ENCODE measurements at regions of chr11 and their contacts with region 1.

Region 1: DNA sequence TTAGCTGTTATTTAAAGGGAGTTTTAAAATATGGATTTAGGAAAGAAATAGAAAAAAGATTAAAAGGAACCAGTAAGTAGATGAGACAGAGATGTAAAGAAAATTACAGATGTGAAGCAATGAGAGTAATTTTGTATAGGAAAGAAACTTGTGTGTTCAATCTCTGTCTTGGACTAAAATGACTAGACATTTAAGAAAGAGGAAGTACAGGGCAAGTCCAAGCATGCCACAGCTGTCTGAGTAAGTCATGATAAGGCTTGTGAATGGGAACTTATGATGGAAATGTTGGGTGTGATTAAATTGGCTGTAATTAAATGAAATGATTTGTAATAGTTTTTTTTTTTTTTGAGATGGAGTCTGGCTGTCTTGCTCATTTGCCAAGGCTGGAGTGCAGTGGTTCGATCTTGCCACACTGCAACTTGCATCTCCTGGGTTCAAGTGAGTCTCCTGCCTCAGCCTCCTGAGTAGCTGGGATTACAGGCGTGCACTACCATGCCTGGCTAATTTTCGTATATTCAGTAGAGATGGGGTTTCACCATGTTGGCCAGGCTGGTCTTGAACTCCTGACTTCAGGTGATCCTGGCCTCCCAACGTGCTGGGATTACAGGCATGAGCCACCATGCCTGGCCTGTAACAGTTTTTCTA is 5.9 kb upstream of the ACY3 start:
- DNase-seq: no peak
- H3K4me3 ChIP-seq: no peak overlapping the region
- H3K27me3 ChIP-seq: 0 out of 2 replicates have a peak, but pooled peaks cover 1% of the 10 kb centered on the region
- CTCF ChIP-seq: no peak

Region 2: GRCh38 chr11:66950113-66950535 is 706.3 kb before region 1 on chr11:
- CTCF ChIA-PET with region 1: no interaction called
- POLR2A ChIA-PET with region 1: no interaction called
- DNase-seq: no peak
- H3K4me3 ChIP-seq: no peak overlapping the region
- H3K27me3 ChIP-seq: no peaks in the 10 kb centered on the region
- CTCF ChIP-seq: no peak

Region 3: DNA sequence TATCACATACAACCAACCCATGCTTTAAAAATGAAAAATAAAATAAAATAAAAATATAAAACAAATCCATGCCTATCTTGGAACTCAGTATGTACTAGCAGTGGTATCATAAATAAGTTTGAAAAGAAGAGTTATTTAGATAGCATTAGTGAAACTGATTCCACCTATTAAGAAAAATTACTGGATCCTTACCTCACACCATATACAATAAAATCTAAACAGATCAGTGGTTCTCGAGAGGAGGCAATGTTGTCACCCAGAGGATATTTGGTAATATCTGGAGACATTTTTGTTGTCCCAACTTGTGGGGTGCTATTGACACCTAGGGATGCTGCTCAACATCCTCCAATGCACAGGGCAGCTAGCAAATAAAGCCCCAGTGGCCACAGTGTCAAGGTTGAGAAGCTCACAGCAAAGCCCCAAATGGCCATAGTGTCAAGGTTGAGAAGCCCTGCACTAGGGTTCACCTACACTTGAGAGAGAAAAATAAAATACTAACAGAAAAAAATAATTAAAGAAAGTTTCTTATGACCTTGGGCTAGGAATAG is 59.6 kb before region 1 on chr11:
- CTCF ChIA-PET with region 1: no interaction called
- POLR2A ChIA-PET with region 1: no interaction called
- DNase-seq: no peak
- H3K4me3 ChIP-seq: no peak overlapping the region
- H3K27me3 ChIP-seq: peaks cover 8% of the 10 kb centered on the region; the same call in 1 of the 2 replicates
- CTCF ChIP-seq: no peak

Region 4: GRCh38 chr11:67674442-67674901 is 18.1 kb after region 1 on chr11 and contains the start of gene ALDH3B2:
- CTCF ChIA-PET with region 1: interaction called, 11 read pairs
- POLR2A ChIA-PET with region 1: no interaction called
- DNase-seq: no peak
- H3K4me3 ChIP-seq: no peak within 1 kb of the TSS
- H3K27me3 ChIP-seq: peaks cover 5% of the 10 kb centered on the region
- CTCF ChIP-seq: no peak
- polyA plus RNA-seq, gene ALDH3B2: not detected in 2 replicates

Measured in BJ (cell line).